ENCODE measurements at regions of chr3 and their contacts with region 1.

Region 1: DNA sequence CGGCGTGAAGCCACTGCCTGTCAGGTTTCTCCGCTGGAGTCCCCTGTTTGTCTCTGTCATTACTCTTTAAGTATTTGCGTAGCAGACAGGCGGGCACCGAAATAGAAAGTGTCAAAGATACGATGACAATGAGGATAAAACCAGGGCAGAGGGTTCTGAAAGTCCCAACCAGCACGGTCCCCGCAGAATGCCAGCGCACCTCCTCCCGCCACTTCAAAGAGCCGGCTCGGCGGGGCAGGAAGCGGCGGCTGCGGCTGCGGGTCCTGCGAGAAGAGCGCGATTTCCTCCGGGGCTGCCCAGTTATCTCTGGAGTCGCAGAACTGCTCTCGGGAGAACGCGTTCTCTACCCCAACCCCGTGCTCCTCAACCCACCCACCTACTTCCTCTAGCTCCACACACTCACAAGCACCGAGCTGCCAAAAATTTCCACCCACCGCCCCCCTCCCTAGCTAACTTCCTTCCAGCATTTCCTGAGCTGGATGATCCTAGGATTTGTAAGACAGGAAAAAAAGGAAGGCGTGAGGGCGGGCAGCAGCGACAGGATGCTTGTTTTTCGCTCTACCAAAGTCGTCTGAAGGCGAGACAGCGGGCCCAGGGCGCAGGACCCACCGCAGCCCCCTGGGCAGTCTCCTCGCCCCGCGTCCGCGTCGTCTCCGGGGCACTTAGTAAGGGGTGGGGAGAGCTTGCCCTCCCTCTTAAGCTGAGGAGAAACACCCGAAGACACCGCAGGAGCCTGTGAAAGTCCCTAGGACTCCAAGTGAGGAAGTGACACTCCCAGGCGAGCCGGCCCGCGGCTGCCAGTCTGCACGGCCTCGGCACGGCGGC is at the start of gene ARHGAP31:
- DNase-seq: peak; percentile 89
- ATAC-seq: peak; percentile 77
- H3K4me3 Mint-ChIP-seq: peak within 1 kb of the TSS; percentile 79
- H3K27ac Mint-ChIP-seq: peak within 1 kb of the TSS; percentile 85
- H3K4me1 Mint-ChIP-seq: peaks cover 57% of the 10 kb centered on the region
- H3K27me3 Mint-ChIP-seq: peaks cover 13% of the 10 kb centered on the region
- total RNA-seq, gene ARHGAP31: 2.3 to 2.5 TPM

Region 2: GRCh38 chr3:119322835-119323722 is 29.0 kb after region 1 on chr3:
- CTCF ChIA-PET with region 1: interaction called, 3 read pairs
- POLR2A ChIA-PET with region 1: interaction called, 16 read pairs
- DNase-seq: peak; percentile 92
- ATAC-seq: peak; percentile 93
- H3K4me3 Mint-ChIP-seq: peak overlapping the region; percentile 73
- H3K27ac Mint-ChIP-seq: peak overlapping the region; percentile 87
- H3K4me1 Mint-ChIP-seq: peaks cover 21% of the 10 kb centered on the region
- H3K27me3 Mint-ChIP-seq: peaks cover 10% of the 10 kb centered on the region

Measured in activated CD8-positive, alpha-beta T cell treated with anti-CD3 and anti-CD28 coated beads, Interleukin-2, amount 10 ng/mL, durations not matched to agents 7 days and 5 days (primary cell).